GM12878 (cell line): ENCODE measurements at regions of chr1 and their contacts with region 1.

Region 1: GRCh38 chr1:243343970-243344937 is 88.4 kb downstream of the SDCCAG8 start:
- DNase-seq: peak; percentile 20
- ATAC-seq: peak; percentile 63
- H3K4me3 ChIP-seq: no peak overlapping the region
- H3K27ac ChIP-seq: no peak overlapping the region
- H3K4me1 ChIP-seq: no peaks in the 10 kb centered on the region
- H3K27me3 ChIP-seq: no peaks in the 10 kb centered on the region
- CTCF ChIP-seq: peak; percentile 42 to 70 (median 57); a peak in 5 of 6 replicates
- EP300 ChIP-seq: no peak
- POLR2A ChIP-seq: no peak
- RAD21 ChIP-seq: peak; percentile 90

Region 2: GRCh38 chr1:243230914-243231313 is 113.3 kb before region 1 on chr1:
- CTCF ChIA-PET with region 1: no interaction called
- POLR2A ChIA-PET with region 1: no interaction called
- RAD21 ChIA-PET with region 1: no interaction called
- SMC1A ChIA-PET with region 1: no interaction called
- in situ Hi-C with region 1: no loop called
- intact Hi-C with region 1: no loop called
- DNase-seq: no peak
- ATAC-seq: no peak
- H3K4me3 ChIP-seq: no peak overlapping the region
- H3K27ac ChIP-seq: no peak overlapping the region
- H3K4me1 ChIP-seq: no peaks in the 10 kb centered on the region
- H3K27me3 ChIP-seq: no peaks in the 10 kb centered on the region
- CTCF ChIP-seq: no peak
- EP300 ChIP-seq: no peak
- POLR2A ChIP-seq: no peak
- RAD21 ChIP-seq: no peak

Region 3: GRCh38 chr1:243250102-243250501 is 94.2 kb before region 1 on chr1:
- CTCF ChIA-PET with region 1: no interaction called
- POLR2A ChIA-PET with region 1: no interaction called
- RAD21 ChIA-PET with region 1: no interaction called
- SMC1A ChIA-PET with region 1: no interaction called
- in situ Hi-C with region 1: no loop called
- intact Hi-C with region 1: no loop called
- DNase-seq: no peak
- ATAC-seq: no peak
- H3K4me3 ChIP-seq: no peak overlapping the region
- H3K27ac ChIP-seq: no peak overlapping the region
- H3K4me1 ChIP-seq: peaks cover 8% of the 10 kb centered on the region; the same call in 1 of the 2 replicates
- H3K27me3 ChIP-seq: no peaks in the 10 kb centered on the region
- CTCF ChIP-seq: no peak
- EP300 ChIP-seq: no peak
- POLR2A ChIP-seq: no peak
- RAD21 ChIP-seq: no peak

Region 4: DNA sequence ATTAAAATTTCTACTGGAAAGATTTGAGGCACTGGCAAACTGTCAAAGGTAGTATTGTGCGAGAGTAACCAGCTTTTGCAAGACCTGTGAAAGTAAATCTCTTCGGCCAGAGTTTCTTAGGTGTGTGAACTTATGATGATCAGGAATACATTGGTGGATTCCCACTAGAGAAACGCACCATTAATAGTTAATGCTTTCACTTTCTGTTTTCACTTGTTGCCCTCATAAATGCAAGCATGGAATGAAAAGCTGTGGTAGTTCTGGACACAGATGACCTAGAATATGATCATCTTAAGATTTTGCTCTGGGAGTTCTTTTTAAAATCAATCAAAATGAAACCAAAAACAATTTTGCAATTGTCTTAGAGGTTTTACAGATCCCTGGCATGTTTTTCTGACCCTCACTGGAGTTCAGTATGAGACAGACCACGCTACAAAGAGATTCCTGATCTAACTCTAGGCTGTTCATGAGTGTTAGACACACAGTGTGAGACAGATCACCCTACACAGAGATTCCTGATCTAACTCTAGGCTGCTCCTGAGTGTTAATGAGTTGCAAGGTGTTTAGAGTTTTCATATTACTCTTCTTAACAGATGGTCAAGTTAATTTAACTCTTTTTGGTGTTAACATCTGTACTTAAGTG is 10.4 kb after region 1 on chr1:
- CTCF ChIA-PET with region 1: interaction called, 23 read pairs
- POLR2A ChIA-PET with region 1: no interaction called
- RAD21 ChIA-PET with region 1: interaction called, 5 read pairs
- SMC1A ChIA-PET with region 1: interaction called, 3 read pairs
- in situ Hi-C with region 1: no loop called
- intact Hi-C with region 1: no loop called
- DNase-seq: no peak
- ATAC-seq: peak; percentile 68
- H3K4me3 ChIP-seq: 0 out of 2 replicates have a peak overlapping the region, but pooled peaks have one; percentile 2
- H3K27ac ChIP-seq: no peak overlapping the region
- H3K4me1 ChIP-seq: 0 out of 2 replicates have a peak, but pooled peaks cover 3% of the 10 kb centered on the region
- H3K27me3 ChIP-seq: no peaks in the 10 kb centered on the region
- CTCF ChIP-seq: no peak
- EP300 ChIP-seq: no peak
- POLR2A ChIP-seq: no peak
- RAD21 ChIP-seq: no peak

Region 5: DNA sequence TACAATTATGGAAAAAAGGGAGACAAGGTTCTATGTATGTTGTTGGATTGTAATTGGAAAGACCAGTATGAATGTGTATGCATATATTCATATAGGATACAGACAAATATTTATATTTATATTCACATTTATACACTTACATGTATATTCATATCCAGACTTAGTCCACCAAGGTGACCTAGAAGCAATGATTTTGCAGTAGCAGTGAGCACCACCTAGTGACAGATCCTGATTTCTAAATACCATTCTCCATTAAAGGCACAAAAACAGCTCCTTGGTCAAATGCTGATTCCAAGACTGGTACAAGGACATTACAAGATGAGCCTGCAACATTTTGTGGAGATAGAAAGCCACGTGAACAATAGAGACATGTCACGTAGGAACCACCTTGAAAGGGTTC is 65.0 kb after region 1 on chr1:
- CTCF ChIA-PET with region 1: interaction called, 39 read pairs
- POLR2A ChIA-PET with region 1: no interaction called
- RAD21 ChIA-PET with region 1: interaction called, 35 read pairs
- SMC1A ChIA-PET with region 1: interaction called, 14 read pairs
- in situ Hi-C with region 1: no loop called
- intact Hi-C with region 1: loop called (anchors 2 kb)
- DNase-seq: no peak
- ATAC-seq: peak; percentile 50; the same call in 2 of the 3 replicates
- H3K4me3 ChIP-seq: no peak overlapping the region
- H3K27ac ChIP-seq: no peak overlapping the region
- H3K4me1 ChIP-seq: peaks cover 8% of the 10 kb centered on the region; the same call in 1 of the 2 replicates
- H3K27me3 ChIP-seq: no peaks in the 10 kb centered on the region
- CTCF ChIP-seq: peak; percentile 14 to 42 (median 36); a peak in 4 of 6 replicates
- EP300 ChIP-seq: no peak
- POLR2A ChIP-seq: no peak
- RAD21 ChIP-seq: peak; percentile 54

Region 6: DNA sequence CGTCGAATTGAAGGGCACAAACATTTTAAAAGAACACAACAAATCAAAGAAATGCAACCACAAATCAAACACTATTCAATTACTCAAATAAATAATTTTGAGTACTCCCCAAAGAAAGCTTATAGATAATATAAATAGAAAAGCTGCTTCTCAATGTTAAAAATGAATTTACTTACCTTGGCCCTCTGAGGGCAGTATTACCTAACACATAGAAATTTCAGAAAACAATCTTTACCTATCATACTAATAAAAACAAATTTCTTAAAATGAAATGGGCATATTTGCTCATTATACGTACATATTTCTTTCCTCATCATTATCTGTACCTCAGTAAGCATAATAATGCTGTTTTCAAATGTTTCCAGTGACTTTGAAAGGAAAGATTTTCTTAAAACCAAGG is 364.0 kb after region 1 on chr1:
- CTCF ChIA-PET with region 1: interaction called, 16 read pairs
- POLR2A ChIA-PET with region 1: no interaction called
- RAD21 ChIA-PET with region 1: interaction called, 9 read pairs
- SMC1A ChIA-PET with region 1: interaction called, 8 read pairs
- in situ Hi-C with region 1: no loop called
- intact Hi-C with region 1: loop called (anchors 5 kb)
- DNase-seq: no peak
- ATAC-seq: no peak
- H3K4me3 ChIP-seq: no peak overlapping the region
- H3K27ac ChIP-seq: no peak overlapping the region
- H3K4me1 ChIP-seq: no peaks in the 10 kb centered on the region
- H3K27me3 ChIP-seq: no peaks in the 10 kb centered on the region
- CTCF ChIP-seq: peak in 1 of 3 experiments; percentile 28; a peak in 2 of 6 replicates
- EP300 ChIP-seq: no peak
- POLR2A ChIP-seq: no peak
- RAD21 ChIP-seq: peak; percentile 57

Region 7: GRCh38 chr1:244047621-244048471 is 703.6 kb after region 1 on chr1:
- CTCF ChIA-PET with region 1: interaction called, 6 read pairs
- POLR2A ChIA-PET with region 1: no interaction called
- RAD21 ChIA-PET with region 1: no interaction called
- SMC1A ChIA-PET with region 1: interaction called, 3 read pairs
- in situ Hi-C with region 1: no loop called
- intact Hi-C with region 1: loop called (anchors 10 kb)
- DNase-seq: peak; percentile 92
- ATAC-seq: peak; percentile 92
- H3K4me3 ChIP-seq: peak overlapping the region; percentile 75
- H3K27ac ChIP-seq: peak overlapping the region; percentile 67
- H3K4me1 ChIP-seq: peaks cover 20% of the 10 kb centered on the region
- H3K27me3 ChIP-seq: no peaks in the 10 kb centered on the region; a peak in 1 of 4 replicates
- CTCF ChIP-seq: no peak
- EP300 ChIP-seq: peak in 1 of 2 experiments; percentile 32; a peak in 1 of 4 replicates
- POLR2A ChIP-seq: peak; percentile 91
- RAD21 ChIP-seq: no peak

Region 8: DNA sequence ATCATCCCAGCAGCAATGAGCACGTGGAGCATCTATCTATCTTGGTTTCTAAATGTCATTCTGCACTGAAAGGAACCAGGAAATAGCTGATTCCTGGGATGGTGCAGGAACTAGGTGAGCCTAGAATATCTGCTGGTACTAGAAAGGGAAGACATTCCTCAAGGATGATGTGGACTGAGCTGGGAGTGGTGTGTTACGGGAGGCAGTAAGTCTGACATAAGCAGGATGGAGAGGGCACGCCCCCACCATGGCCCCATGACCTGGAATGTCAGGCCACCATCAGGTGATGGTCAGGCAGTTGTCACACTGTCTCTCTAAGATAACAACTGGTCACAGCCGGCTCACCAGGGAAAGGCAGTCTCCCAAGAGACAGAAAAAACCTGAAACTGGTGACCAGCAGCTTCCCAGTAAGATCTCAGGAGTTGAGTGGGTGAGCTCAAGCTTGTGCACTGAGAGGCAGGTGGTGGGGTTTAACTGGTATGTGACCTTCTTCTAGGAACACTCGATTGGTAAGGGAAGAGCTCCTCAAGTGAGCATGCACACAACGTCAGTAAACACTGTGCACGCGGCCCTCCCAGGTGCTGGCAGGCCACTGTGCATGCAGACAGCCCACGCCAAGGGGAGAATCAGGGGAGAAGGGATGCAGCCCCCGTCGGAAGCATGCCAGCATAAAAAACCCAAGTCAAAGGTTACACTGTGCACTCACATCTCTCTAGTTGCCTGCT is 958.8 kb after region 1 on chr1:
- CTCF ChIA-PET with region 1: interaction called, 5 read pairs
- POLR2A ChIA-PET with region 1: no interaction called
- RAD21 ChIA-PET with region 1: interaction called, 8 read pairs
- SMC1A ChIA-PET with region 1: interaction called, 4 read pairs
- in situ Hi-C with region 1: no loop called
- intact Hi-C with region 1: loop called (anchors 1 kb)
- DNase-seq: no peak
- ATAC-seq: no peak
- H3K4me3 ChIP-seq: no peak overlapping the region
- H3K27ac ChIP-seq: no peak overlapping the region
- H3K4me1 ChIP-seq: peaks cover 3% of the 10 kb centered on the region
- H3K27me3 ChIP-seq: no peaks in the 10 kb centered on the region
- CTCF ChIP-seq: no peak
- EP300 ChIP-seq: no peak
- POLR2A ChIP-seq: no peak
- RAD21 ChIP-seq: no peak